ENCODE measurements at regions of chr1 and their contacts with region 1.

Region 1: DNA sequence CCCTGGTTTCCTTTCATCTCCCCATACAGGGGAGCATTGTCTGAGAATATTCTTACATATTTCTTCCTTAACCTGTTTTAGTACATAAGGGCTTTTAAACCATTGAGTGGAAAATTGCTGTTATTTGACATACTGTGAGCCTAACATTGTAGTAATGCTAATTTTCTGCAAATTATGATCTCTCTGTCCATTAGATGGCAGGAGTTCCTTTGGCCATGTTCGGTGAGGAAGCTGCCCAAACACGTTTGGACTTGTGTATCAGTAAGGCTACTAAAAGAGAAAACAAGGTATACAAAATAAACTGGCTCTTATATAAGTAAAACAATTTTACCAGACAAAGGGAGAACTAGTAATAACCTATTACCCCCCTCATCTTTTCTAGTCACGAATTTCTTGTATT is 29.2 kb downstream of the CDC7 start:
- DNase-seq: peak; percentile 25
- H3K4me3 Mint-ChIP-seq: no peak overlapping the region
- H3K27ac Mint-ChIP-seq: peak overlapping the region; percentile 45
- H3K4me1 Mint-ChIP-seq: peaks cover 10% of the 10 kb centered on the region
- H3K27me3 Mint-ChIP-seq: no peaks in the 10 kb centered on the region
- CTCF ChIP-seq: no peak

Region 2: DNA sequence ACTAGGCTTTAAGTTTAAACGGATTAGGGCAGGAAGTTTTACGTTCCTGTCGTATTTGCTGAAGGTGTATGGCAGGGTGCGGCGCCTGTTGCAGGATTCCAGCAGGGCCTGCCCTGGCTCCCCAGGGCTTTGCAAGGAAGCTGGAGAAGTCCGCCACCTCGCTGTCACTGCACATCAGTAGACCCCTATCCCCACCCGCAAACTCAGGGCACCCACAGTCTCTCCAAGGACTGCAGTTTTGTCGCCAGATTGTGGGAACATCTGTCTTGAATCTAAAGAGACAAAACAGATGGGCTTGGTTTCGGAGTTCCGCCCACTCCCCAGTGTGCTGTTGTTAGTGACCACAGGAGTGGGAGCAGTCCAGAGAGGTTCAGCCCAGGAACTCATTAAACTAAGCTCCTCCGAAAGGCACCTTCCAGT is 81.7 kb after region 1 on chr1:
- CTCF ChIA-PET with region 1: no interaction called
- intact Hi-C with region 1: loop called (anchors 5 kb)
- DNase-seq: peak; percentile 79
- H3K4me3 Mint-ChIP-seq: peak overlapping the region; percentile 43
- H3K27ac Mint-ChIP-seq: peak overlapping the region; percentile 64
- H3K4me1 Mint-ChIP-seq: peaks cover 58% of the 10 kb centered on the region
- H3K27me3 Mint-ChIP-seq: no peaks in the 10 kb centered on the region
- CTCF ChIP-seq: no peak

Region 3: GRCh38 chr1:92909321-92909720 is 1379.5 kb after region 1 on chr1:
- CTCF ChIA-PET with region 1: no interaction called
- intact Hi-C with region 1: no loop called
- DNase-seq: no peak
- H3K4me3 Mint-ChIP-seq: no peak overlapping the region
- H3K27ac Mint-ChIP-seq: no peak overlapping the region
- H3K4me1 Mint-ChIP-seq: peaks cover 16% of the 10 kb centered on the region
- H3K27me3 Mint-ChIP-seq: no peaks in the 10 kb centered on the region
- CTCF ChIP-seq: no peak

Measured in Calu3 (cell line).